ENCODE measurements at regions of chr11 and their contacts with region 1.

Region 1: DNA sequence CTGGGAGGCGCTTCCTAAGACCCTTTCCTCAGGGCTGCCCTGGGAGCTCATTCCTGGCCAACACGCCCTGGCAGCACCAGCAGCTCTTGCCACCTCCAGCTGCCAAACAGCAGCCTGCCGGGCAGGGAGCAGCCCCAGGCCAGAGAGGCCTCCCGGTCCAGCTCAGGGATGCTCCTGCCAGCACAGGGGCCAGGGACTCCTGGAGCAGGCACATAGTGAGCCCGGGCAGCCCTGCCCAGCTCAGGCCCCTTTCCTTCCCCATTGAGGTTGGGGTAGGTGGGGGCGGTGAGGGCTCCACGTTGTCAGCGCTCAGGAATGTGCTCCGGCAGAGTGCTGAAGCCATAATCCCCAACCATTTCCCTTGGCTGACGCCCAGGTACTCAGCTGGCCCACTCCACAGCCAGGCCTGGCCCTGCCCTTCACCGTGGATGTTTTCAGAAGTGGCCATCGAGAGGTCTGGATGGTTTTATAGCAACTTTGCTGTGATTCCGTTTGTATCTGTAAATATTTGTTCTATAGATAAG is 7.6 kb downstream of the SLC39A13 start:
- DNase-seq: peak in 1 of 10 donors; percentile 52
- H3K4me3 ChIP-seq: no peak overlapping the region
- H3K27ac ChIP-seq: peak overlapping the region in 47 of 59 donors; percentile 3 to 79 (median 54)
- H3K27me3 ChIP-seq: no peaks in the 10 kb centered on the region
- CTCF ChIP-seq: no peak

Region 2: DNA sequence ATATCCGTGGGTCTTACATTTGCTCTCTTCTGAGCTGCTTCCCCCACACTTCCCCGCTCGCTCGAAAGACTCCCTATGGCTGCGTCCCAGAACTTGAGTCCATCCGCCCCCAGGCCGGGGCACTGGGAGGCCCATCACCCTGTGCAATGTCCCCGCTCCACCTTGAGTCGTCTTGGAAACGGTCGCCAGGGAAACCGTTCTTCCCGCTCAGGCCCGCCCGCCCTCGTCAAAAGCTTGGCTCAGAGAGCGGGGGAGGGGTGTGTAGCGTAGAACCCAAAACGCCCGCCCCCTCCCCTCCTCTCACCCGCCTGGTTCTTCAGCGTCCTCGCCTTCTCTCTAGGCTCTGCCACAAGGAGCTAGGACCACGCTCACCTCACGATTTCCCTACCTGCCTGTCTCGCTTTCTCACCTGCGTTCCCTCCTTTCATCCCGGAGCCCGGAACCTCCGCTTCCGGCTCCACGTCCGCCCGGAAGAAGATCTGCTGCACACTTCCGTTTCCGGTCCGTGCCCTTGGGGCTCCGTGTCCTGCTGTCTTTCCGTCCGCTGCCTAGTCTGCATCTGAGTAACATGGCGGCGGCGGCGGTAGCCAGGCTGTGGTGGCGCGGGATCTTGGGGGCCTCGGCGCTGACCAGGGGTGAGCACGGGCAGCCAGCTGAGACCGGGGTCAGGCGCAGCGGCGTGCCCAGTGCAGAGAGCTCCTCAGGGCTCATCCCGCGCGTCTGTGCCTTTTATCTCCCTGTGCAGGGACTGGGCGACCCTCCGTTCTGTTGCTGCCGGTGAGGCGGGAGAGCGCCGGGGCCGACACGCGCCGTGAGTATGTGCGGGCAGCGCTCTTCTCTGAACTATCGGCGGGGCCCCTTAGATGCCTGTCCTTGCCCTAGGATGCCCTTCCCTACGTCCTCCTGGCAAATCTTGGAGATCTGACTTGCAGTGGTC is 162.8 kb after region 1 on chr11 and contains the starts of genes KBTBD4 and NDUFS3:
- intact Hi-C with region 1: loop called in 1 of 2 experiments (anchors 5 kb)
- DNase-seq: peak; percentile 76 to 93 (median 91)
- H3K4me3 ChIP-seq: peak within 1 kb of the TSS; percentile 77 to 100 (median 94)
- H3K27ac ChIP-seq: peak within 1 kb of the TSS; percentile 65 to 98 (median 92)
- H3K27me3 ChIP-seq: no peaks in the 10 kb centered on the region
- CTCF ChIP-seq: peak in 28 of 56 donors; percentile 10 to 57 (median 28)
- total RNA-seq, gene KBTBD4: 12.8 to 27.9 (median 19.6) TPM
- total RNA-seq, gene NDUFS3: 59.7 to 172 (median 126) TPM

Measured in dorsolateral prefrontal cortex (tissue), 120 donors.